ENCODE measurements at regions of chr16 and their contacts with region 1.

Region 1: GRCh38 chr16:85699628-85700027 is 10.9 kb upstream of the GINS2 start:
- DNase-seq: no peak
- ATAC-seq: 0 out of 2 replicates have a peak, but pooled peaks have one; percentile 7
- H3K4me3 Mint-ChIP-seq: no peak overlapping the region
- H3K27ac Mint-ChIP-seq: no peak overlapping the region
- H3K4me1 Mint-ChIP-seq: 0 out of 2 replicates have a peak, but pooled peaks cover 6% of the 10 kb centered on the region
- H3K27me3 Mint-ChIP-seq: peaks cover 4% of the 10 kb centered on the region
- CTCF ChIP-seq: no peak

Region 2: DNA sequence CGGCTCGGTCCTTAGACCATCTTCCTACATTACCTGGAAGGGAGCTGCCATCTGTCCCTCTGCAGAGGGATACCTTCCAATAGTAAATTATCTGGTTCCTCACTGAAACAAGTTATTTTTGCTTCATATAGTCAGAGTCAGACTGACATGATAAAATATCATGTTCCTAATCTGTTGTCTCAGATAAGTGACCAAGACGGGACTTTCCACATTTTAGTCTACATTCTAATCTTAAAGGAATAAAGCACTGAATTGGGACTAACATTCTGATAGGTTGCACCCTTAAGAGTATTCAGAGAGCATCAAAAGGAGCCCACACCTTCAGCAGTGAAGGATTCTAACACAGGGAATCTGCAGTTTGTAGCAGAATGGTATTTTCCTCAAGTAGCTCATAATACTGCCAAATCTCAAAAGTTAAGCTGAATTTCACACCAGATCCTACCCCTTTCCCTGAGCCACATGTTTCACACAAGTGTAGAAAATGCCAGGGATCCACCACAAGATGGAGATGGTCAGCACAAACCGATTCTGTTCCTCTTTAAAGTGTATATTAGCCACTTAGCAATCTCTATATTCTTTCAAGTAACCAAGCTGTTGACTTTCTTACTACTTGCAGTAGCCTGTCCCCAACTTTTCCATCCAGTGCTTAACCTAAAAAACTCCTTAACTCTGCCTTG is 24.2 kb before region 1 on chr16:
- CTCF ChIA-PET with region 1: interaction called, 11 read pairs
- POLR2A ChIA-PET with region 1: no interaction called
- DNase-seq: no peak
- ATAC-seq: peak; percentile 53
- H3K4me3 Mint-ChIP-seq: no peak overlapping the region
- H3K27ac Mint-ChIP-seq: no peak overlapping the region
- H3K4me1 Mint-ChIP-seq: no peaks in the 10 kb centered on the region
- H3K27me3 Mint-ChIP-seq: no peaks in the 10 kb centered on the region
- CTCF ChIP-seq: no peak

Region 3: DNA sequence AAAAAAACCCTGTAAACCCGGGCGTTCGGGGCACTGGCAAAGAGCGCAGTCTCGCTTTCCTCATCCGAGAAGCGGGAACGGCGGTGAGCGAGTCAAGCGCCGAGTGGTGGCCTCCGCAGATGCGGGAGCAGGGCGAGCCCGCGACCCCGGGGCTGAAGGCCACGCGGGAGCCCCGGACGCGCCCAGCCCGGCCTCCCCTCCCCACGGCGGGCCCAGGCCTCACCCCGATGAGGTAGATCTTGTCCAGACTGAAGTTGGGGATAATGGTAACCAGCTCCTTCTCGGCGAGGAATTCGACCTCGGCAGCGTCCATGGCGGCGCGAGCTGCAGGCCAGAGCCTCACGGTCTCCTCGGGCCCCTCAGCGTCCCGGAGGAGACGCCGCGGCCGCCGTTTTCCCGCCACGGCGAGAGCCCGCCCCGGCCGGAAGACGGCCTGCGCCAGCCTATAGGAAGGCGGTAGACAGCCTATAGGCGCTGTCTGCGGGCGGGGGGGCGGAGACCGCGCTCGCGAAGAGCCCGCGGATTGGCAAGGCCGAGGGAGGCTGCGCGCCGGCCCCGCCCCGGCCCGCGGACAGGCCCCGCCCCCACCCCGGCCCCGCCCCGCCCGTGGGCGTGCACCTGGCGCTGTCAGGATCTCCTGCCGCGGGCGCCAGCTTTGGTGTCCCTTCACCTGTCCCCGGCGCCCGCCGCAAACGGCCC is 10.9 kb before region 1 on chr16 and contains the start of gene GINS2:
- CTCF ChIA-PET with region 1: interaction called, 14 read pairs
- POLR2A ChIA-PET with region 1: interaction called, 3 read pairs
- DNase-seq: peak; percentile 93
- ATAC-seq: peak; percentile 99
- H3K4me3 Mint-ChIP-seq: peak within 1 kb of the TSS; percentile 74
- H3K27ac Mint-ChIP-seq: no peak within 1 kb of the TSS
- H3K4me1 Mint-ChIP-seq: peaks cover 10% of the 10 kb centered on the region
- H3K27me3 Mint-ChIP-seq: peaks cover 17% of the 10 kb centered on the region; the same call in 1 of the 2 replicates
- CTCF ChIP-seq: no peak
- total RNA-seq, gene GINS2: 35.5 to 38.4 TPM (median 38.0 TPM) in 3 replicates